Activated CD8-positive, alpha-beta T cell treated with anti-CD3 and anti-CD28 coated beads, Interleukin-2, amount 10 ng/mL, durations not matched to agents 7 days and 5 days (primary cell): ENCODE measurements at regions of chr10 and their contacts with region 1.

Region 1: DNA sequence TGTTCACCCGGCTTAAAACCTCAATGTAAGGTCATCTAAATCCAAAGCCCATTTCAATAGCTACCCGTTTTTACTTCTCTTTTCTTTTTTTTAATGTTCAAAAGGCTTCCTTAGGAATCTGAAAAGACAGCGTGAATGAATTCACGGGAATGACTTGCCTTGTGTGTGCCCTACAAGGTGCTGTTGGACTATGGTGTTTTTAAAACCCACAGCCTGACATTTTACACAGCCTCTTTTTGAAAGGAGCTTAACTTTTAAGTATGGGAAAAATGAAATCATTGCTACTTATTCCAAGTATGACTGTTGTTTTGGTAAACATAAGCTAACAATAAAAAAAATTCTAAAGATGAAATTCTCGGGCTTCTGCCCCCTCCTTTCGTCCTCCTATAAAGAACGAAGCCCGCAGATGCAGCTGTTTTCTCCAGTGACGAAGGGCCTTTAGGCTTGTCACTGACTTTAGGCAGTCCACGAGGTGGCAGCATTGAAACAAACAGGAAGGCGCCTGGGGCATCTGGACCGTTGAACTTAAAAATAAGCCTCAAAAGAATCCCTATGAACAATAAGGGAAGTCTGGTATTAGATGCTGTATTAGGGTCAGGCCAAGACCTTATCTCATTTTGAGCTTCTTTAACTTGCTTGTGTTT is 141.3 kb downstream of the NRP1 start:
- DNase-seq: peak; percentile 77
- ATAC-seq: peak; percentile 80
- H3K4me3 Mint-ChIP-seq: no peak overlapping the region
- H3K27ac Mint-ChIP-seq: no peak overlapping the region
- H3K4me1 Mint-ChIP-seq: no peaks in the 10 kb centered on the region
- H3K27me3 Mint-ChIP-seq: peaks cover 21% of the 10 kb centered on the region

Region 2: DNA sequence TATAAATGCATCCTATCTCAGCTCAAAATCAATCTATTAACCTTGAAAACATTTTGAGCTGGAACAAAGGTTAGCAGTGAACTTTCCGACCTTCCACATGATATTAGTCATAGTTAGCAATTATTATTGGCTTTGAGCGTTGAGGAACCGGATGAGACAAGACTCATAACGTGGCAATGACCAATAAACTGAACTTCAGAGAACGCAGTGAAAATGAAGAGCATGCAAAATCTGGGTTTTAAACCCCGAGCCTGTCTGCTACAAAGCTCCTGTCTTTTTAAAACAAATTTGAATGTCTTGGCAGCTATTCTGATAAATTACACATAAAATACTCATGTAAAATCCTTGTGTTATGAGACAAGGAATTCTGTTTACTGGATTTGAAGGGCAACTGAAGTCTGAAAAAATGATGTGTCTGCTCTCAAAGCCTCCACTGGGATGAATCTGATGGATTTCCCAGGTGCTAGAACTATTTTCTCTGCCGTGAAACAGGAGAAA is 160.5 kb before region 1 on chr10:
- CTCF ChIA-PET with region 1: no interaction called
- POLR2A ChIA-PET with region 1: no interaction called
- DNase-seq: no peak
- ATAC-seq: no peak
- H3K4me3 Mint-ChIP-seq: no peak overlapping the region
- H3K27ac Mint-ChIP-seq: no peak overlapping the region
- H3K4me1 Mint-ChIP-seq: peaks cover 4% of the 10 kb centered on the region
- H3K27me3 Mint-ChIP-seq: peaks cover 2% of the 10 kb centered on the region

Region 3: GRCh38 chr10:33115738-33116719 is 77.2 kb before region 1 on chr10:
- CTCF ChIA-PET with region 1: interaction called, 14 read pairs
- POLR2A ChIA-PET with region 1: no interaction called
- DNase-seq: peak; percentile 39
- ATAC-seq: no peak
- H3K4me3 Mint-ChIP-seq: no peak overlapping the region
- H3K27ac Mint-ChIP-seq: peak overlapping the region; percentile 26
- H3K4me1 Mint-ChIP-seq: peaks cover 44% of the 10 kb centered on the region
- H3K27me3 Mint-ChIP-seq: no peaks in the 10 kb centered on the region

Region 4: GRCh38 chr10:33174674-33175434 is 18.3 kb before region 1 on chr10:
- CTCF ChIA-PET with region 1: interaction called, 11 read pairs
- POLR2A ChIA-PET with region 1: no interaction called
- DNase-seq: no peak
- ATAC-seq: no peak
- H3K4me3 Mint-ChIP-seq: no peak overlapping the region
- H3K27ac Mint-ChIP-seq: no peak overlapping the region
- H3K4me1 Mint-ChIP-seq: no peaks in the 10 kb centered on the region
- H3K27me3 Mint-ChIP-seq: peaks cover 6% of the 10 kb centered on the region

Region 5: DNA sequence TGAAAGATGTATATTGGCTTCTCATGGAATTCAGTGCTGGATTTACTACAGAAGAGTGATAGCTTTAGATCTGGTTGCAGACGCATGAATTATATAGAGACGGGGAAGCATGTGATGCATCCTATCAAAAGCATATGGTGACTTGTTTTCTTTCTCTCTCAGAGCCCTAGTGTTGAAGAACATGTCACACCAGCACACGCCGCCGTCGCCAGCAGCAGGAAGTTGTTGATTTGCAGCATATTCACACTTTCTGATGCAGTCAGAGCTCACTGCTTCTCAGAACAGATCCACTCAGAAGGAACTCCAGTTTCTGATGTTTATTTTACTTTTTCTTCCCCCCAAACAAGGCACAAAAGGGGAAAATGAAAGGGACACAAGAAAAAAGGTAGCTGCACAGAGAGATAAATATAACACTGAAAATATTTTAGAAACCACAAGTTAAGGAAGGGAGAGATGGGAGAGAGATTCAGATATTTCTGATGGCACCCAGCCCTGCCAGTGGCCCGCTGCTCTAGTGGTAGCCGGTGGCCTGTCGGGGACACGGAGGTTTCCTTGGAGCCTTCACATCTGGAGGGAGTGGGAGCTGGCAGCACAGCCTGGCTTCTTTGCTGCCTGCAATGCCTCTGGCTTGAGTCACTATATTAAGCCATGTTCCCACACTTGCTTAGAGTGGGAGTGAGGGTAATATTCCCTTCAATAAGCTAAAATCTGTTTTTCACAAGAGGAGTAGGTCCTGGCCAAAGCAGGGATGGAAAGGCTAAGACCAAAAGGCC is 18.1 kb after region 1 on chr10:
- CTCF ChIA-PET with region 1: interaction called, 26 read pairs
- POLR2A ChIA-PET with region 1: no interaction called
- DNase-seq: peak; percentile 29
- ATAC-seq: no peak
- H3K4me3 Mint-ChIP-seq: no peak overlapping the region
- H3K27ac Mint-ChIP-seq: peak overlapping the region; percentile 56
- H3K4me1 Mint-ChIP-seq: peaks cover 10% of the 10 kb centered on the region
- H3K27me3 Mint-ChIP-seq: no peaks in the 10 kb centered on the region

Region 6: DNA sequence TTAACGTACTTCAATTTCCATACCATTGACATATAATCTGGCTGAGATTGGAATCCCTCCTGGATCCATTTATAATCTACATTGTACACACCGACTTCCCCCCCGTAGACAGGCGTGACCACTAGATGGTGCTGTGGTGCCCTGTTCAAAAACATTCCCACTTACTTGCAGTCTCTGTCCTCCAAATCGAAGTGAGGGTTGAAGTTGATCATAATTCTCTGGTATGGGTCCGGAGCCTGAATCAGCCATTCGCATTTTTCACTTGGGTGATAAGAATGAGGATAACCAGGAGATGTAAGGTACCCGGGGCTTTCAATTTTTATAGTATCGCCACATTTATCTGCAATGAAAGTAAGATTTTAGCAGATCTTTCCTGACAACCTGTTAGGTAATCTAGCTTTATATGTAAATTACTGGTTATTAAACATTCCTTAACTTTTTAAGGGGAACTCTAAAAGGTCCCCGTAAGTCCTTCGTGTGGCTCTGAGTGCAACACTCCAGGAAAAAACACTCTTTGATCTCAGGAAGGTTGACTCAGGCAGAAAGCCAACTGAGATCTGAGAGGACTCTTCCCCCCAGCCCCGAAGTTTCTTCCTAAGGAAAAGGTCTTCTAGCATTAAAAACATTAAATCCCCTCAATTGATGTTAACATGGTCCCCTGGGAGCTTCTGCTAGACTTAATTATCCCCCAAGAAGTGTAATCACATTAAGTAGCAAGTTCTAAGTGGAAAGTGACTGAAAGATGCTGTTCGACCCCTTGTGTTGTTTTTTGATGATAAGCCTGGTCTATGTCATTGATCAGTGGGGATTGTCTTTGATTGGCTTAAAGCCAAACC is 137.6 kb after region 1 on chr10:
- CTCF ChIA-PET with region 1: interaction called, 21 read pairs
- POLR2A ChIA-PET with region 1: no interaction called
- DNase-seq: peak; percentile 82
- ATAC-seq: peak; percentile 59
- H3K4me3 Mint-ChIP-seq: no peak overlapping the region
- H3K27ac Mint-ChIP-seq: no peak overlapping the region
- H3K4me1 Mint-ChIP-seq: peaks cover 20% of the 10 kb centered on the region
- H3K27me3 Mint-ChIP-seq: peaks cover 61% of the 10 kb centered on the region

Region 7: GRCh38 chr10:33489501-33490176 is 296.5 kb after region 1 on chr10:
- CTCF ChIA-PET with region 1: no interaction called
- POLR2A ChIA-PET with region 1: no interaction called
- DNase-seq: no peak
- ATAC-seq: no peak
- H3K4me3 Mint-ChIP-seq: no peak overlapping the region
- H3K27ac Mint-ChIP-seq: no peak overlapping the region
- H3K4me1 Mint-ChIP-seq: peaks cover 10% of the 10 kb centered on the region
- H3K27me3 Mint-ChIP-seq: no peaks in the 10 kb centered on the region